Transverse colon (tissue), 4 donors: ENCODE measurements at regions of chr3 and their contacts with region 1.

Region 1: GRCh38 chr3:60742606-60743145 is 508.6 kb downstream of the FHIT start:
- DNase-seq: no peak
- H3K4me3 ChIP-seq: no peak overlapping the region
- H3K27ac ChIP-seq: no peak overlapping the region
- H3K4me1 ChIP-seq: no peaks in the 10 kb centered on the region
- H3K27me3 ChIP-seq: no peaks in the 10 kb centered on the region
- CTCF ChIP-seq: no peak
- EP300 ChIP-seq: no peak
- POLR2A ChIP-seq: no peak

Region 2: DNA sequence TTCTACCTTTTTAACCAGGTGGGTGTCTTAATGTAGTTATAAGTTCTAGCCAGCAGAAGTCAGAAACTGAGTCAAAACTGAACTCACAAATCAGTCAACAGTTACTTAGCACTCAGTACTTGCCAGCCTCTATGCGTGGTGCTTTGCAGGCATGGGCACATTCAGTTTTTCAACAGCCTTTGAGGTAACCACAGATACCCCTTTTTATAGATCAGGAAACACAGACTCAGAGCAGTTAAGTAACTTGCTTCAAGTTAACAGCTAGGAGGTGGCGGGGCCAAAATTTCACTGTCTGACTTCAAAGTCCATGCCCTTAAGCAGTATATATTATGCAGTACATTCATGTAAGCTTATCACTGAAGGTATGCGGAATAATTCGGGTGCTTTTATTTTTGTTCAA is 369.1 kb after region 1 on chr3:
- in situ Hi-C with region 1: no loop called
- intact Hi-C with region 1: no loop called
- DNase-seq: peak; percentile 8
- H3K4me3 ChIP-seq: no peak overlapping the region
- H3K27ac ChIP-seq: no peak overlapping the region
- H3K4me1 ChIP-seq: no peaks in the 10 kb centered on the region
- H3K27me3 ChIP-seq: no peaks in the 10 kb centered on the region
- CTCF ChIP-seq: no peak
- EP300 ChIP-seq: no peak
- POLR2A ChIP-seq: no peak

Region 3: DNA sequence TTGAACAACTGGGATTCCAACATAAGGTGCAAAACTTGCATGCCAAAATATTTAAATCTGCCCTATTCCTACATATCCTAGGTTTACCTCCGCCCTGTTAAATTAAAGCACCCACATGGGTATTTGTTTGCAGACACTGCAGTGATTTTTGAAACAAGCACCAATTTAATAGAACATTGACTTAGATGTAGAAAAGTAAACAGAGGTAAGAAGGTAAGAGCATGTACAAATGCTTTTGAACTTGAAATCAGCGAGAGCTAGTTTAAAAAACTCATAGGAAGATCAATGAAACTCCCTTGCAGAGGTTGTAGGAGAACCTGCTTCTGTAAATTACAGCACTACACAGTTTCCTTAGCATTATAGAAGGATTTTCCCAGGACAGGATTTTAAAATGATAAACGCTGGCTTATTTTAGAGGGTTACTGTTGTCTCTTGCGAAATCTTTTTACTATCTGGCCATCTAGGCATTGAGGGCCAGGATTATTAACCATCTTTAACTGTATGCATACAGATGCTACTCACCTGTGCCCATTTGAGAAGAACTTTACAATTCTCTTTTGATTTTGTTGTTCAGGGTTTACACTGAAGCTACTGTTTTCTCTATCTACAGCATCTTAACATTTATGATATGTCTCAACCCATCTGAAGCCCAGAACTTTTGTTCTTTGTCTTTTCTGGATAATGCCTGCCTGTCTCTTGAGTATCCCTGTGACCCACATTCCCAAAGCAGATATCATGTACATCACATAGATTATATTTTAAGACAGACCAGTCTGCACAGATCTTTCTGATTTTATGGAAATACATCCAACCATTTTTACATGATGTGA is 1346.0 kb after region 1 on chr3:
- in situ Hi-C with region 1: no loop called
- intact Hi-C with region 1: loop called (anchors 5 kb)
- DNase-seq: no peak
- H3K4me3 ChIP-seq: no peak overlapping the region
- H3K27ac ChIP-seq: no peak overlapping the region
- H3K4me1 ChIP-seq: peaks cover 0 to 3% (median 0%) of the 10 kb centered on the region in 4 donors
- H3K27me3 ChIP-seq: no peaks in the 10 kb centered on the region
- CTCF ChIP-seq: no peak
- EP300 ChIP-seq: no peak
- POLR2A ChIP-seq: no peak